CD8-positive, alpha-beta T cell (primary cell): ENCODE measurements at regions of chr19 and their contacts with region 1.

Region 1: GRCh38 chr19:34220472-34221063 is 33.8 kb upstream of the GARRE1 start:
- DNase-seq: peak; percentile 24 to 78 (median 65)
- ATAC-seq: no peak
- H3K4me3 ChIP-seq: no peak overlapping the region
- H3K4me3 Mint-ChIP-seq: no peak overlapping the region
- H3K27ac ChIP-seq: no peak overlapping the region
- H3K27ac Mint-ChIP-seq: peak overlapping the region; percentile 8
- H3K4me1 ChIP-seq: peaks cover 28% of the 10 kb centered on the region
- H3K4me1 Mint-ChIP-seq: peaks cover 58% of the 10 kb centered on the region
- H3K27me3 ChIP-seq: no peaks in the 10 kb centered on the region
- H3K27me3 Mint-ChIP-seq: no peaks in the 10 kb centered on the region
- CTCF ChIP-seq: peak; percentile 81

Region 2: DNA sequence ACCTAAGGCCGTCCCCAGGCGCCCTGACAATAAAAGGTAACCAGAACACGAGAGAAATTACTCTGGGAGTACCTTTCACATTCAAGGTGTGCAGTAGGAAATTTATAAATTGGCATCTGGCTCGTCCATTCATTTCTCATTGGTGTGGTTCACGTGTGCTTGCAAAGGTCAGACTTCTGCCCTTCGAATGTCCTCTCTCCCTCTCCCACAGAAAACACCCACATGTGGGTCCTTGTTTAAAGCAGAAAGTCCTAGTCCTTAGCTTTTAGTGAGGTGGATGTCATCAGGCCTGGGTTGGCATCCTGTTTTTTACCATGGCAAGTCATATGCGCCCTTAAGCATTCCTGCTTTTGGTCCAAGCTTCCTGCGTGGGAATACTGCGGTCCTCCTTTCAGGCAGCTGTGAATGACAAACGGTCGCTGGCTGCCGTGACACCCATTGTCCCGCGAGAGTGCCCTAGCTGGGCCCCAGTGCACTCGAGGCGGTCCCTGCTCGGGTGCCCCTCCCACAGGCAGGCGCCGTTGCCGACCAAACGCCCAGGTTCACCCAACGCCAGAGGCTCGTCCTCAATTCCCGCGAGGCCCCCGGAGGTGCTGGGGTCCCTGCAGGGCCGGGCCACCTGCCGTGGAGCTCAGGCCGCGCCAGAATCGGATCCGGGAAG is 1529.1 kb before region 1 on chr19 and contains the start of gene NUDT19:
- CTCF ChIA-PET with region 1: no interaction called
- POLR2A ChIA-PET with region 1: no interaction called
- intact Hi-C with region 1: loop called in 1 of 2 experiments (anchors 10 kb)
- DNase-seq: peak; percentile 53 to 85 (median 75)
- ATAC-seq: peak; percentile 79
- H3K4me3 ChIP-seq: peak within 1 kb of the TSS; percentile 60 to 79
- H3K4me3 Mint-ChIP-seq: peak within 1 kb of the TSS; percentile 92
- H3K27ac ChIP-seq: peak within 1 kb of the TSS; percentile 35 to 74
- H3K27ac Mint-ChIP-seq: peak within 1 kb of the TSS; percentile 90
- H3K4me1 ChIP-seq: peaks cover 35% of the 10 kb centered on the region
- H3K4me1 Mint-ChIP-seq: peaks cover 52% of the 10 kb centered on the region
- H3K27me3 ChIP-seq: no peaks in the 10 kb centered on the region
- H3K27me3 Mint-ChIP-seq: no peaks in the 10 kb centered on the region
- CTCF ChIP-seq: no peak
- total RNA-seq, gene NUDT19: 15.3 to 18.0 TPM

Region 3: DNA sequence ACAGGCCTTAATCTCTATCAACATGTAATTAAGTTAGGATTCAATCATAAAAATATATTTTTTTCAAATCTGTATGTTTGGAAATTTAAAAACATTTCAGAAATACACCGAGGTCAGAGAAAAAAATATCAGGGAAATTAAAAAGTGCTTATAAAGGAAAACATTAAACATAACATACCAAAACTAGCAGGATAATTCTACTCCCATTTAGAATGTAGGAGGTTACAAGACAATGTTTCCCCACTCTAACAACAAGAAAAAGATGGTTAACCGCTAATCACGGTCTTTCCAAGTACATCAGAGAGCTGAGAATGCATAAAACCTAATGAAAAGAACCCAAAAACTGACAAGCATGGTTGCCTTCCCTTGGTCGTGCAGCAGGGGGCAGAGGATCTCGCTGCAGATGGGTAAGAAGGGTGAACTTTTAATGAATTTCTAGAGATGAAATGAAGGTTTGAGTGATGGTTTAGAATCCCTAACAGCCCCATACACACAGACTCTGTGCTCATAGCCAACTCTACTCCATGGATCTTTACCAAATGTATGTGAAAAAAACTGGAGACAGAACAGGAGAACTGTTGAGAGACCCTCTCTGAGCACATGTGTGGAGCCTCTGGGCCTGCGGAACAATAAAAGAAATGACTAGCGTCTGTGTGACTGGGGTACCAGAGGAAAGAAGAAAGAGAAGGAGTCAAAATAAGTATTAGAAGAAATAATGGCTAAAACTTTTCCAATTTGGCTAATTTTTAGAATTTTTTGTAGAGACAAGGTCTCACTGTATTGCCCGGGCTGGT is 99.5 kb before region 1 on chr19:
- CTCF ChIA-PET with region 1: no interaction called
- POLR2A ChIA-PET with region 1: no interaction called
- intact Hi-C with region 1: loop called in 1 of 2 experiments (anchors 5 kb)
- DNase-seq: peak; percentile 26 to 72 (median 49)
- ATAC-seq: peak; percentile 71
- H3K4me3 ChIP-seq: no peak overlapping the region
- H3K4me3 Mint-ChIP-seq: no peak overlapping the region
- H3K27ac ChIP-seq: no peak overlapping the region
- H3K27ac Mint-ChIP-seq: no peak overlapping the region
- H3K4me1 ChIP-seq: peaks cover 11% of the 10 kb centered on the region
- H3K4me1 Mint-ChIP-seq: peaks cover 17% of the 10 kb centered on the region
- H3K27me3 ChIP-seq: no peaks in the 10 kb centered on the region
- H3K27me3 Mint-ChIP-seq: no peaks in the 10 kb centered on the region
- CTCF ChIP-seq: peak; percentile 73

Region 4: GRCh38 chr19:34134190-34135053 is 86.1 kb before region 1 on chr19:
- CTCF ChIA-PET with region 1: no interaction called
- POLR2A ChIA-PET with region 1: no interaction called
- intact Hi-C with region 1: loop called in 1 of 2 experiments (anchors 5 kb)
- DNase-seq: peak; percentile 80 to 97 (median 92)
- ATAC-seq: peak; percentile 99
- H3K4me3 ChIP-seq: peak overlapping the region; percentile 80 to 89
- H3K4me3 Mint-ChIP-seq: peak overlapping the region; percentile 90
- H3K27ac ChIP-seq: peak overlapping the region; percentile 72 to 81
- H3K27ac Mint-ChIP-seq: peak overlapping the region; percentile 90
- H3K4me1 ChIP-seq: peaks cover 7% of the 10 kb centered on the region
- H3K4me1 Mint-ChIP-seq: peaks cover 11% of the 10 kb centered on the region
- H3K27me3 ChIP-seq: no peaks in the 10 kb centered on the region
- H3K27me3 Mint-ChIP-seq: no peaks in the 10 kb centered on the region
- CTCF ChIP-seq: no peak

Region 5: GRCh38 chr19:34253699-34254551 is 33.4 kb after region 1 on chr19:
- CTCF ChIA-PET with region 1: interaction called, 7 read pairs
- POLR2A ChIA-PET with region 1: no interaction called
- intact Hi-C with region 1: loop called in 1 of 2 experiments (anchors 5 kb)
- DNase-seq: peak in 4 of 9 experiments; percentile 68 to 91 (median 86)
- ATAC-seq: peak; percentile 39
- H3K4me3 ChIP-seq: peak overlapping the region; percentile 78 to 84
- H3K4me3 Mint-ChIP-seq: peak overlapping the region; percentile 98
- H3K27ac ChIP-seq: peak overlapping the region; percentile 87 to 91
- H3K27ac Mint-ChIP-seq: peak overlapping the region; percentile 99
- H3K4me1 ChIP-seq: peaks cover 31% of the 10 kb centered on the region
- H3K4me1 Mint-ChIP-seq: peaks cover 31% of the 10 kb centered on the region
- H3K27me3 ChIP-seq: no peaks in the 10 kb centered on the region
- H3K27me3 Mint-ChIP-seq: no peaks in the 10 kb centered on the region
- CTCF ChIP-seq: no peak

Region 6: GRCh38 chr19:34269968-34270621 is 49.5 kb after region 1 on chr19:
- CTCF ChIA-PET with region 1: interaction called, 3 read pairs
- POLR2A ChIA-PET with region 1: interaction called, 5 read pairs
- intact Hi-C with region 1: loop called (anchors 2 to 5 kb)
- DNase-seq: peak; percentile 42 to 91 (median 72)
- ATAC-seq: peak; percentile 92
- H3K4me3 ChIP-seq: peak overlapping the region; percentile 4 to 5
- H3K4me3 Mint-ChIP-seq: peak overlapping the region; percentile 55
- H3K27ac ChIP-seq: peak overlapping the region; percentile 57 to 82
- H3K27ac Mint-ChIP-seq: peak overlapping the region; percentile 97
- H3K4me1 ChIP-seq: peaks cover 69% of the 10 kb centered on the region
- H3K4me1 Mint-ChIP-seq: peaks cover 80% of the 10 kb centered on the region
- H3K27me3 ChIP-seq: no peaks in the 10 kb centered on the region
- H3K27me3 Mint-ChIP-seq: no peaks in the 10 kb centered on the region
- CTCF ChIP-seq: no peak

Region 7: DNA sequence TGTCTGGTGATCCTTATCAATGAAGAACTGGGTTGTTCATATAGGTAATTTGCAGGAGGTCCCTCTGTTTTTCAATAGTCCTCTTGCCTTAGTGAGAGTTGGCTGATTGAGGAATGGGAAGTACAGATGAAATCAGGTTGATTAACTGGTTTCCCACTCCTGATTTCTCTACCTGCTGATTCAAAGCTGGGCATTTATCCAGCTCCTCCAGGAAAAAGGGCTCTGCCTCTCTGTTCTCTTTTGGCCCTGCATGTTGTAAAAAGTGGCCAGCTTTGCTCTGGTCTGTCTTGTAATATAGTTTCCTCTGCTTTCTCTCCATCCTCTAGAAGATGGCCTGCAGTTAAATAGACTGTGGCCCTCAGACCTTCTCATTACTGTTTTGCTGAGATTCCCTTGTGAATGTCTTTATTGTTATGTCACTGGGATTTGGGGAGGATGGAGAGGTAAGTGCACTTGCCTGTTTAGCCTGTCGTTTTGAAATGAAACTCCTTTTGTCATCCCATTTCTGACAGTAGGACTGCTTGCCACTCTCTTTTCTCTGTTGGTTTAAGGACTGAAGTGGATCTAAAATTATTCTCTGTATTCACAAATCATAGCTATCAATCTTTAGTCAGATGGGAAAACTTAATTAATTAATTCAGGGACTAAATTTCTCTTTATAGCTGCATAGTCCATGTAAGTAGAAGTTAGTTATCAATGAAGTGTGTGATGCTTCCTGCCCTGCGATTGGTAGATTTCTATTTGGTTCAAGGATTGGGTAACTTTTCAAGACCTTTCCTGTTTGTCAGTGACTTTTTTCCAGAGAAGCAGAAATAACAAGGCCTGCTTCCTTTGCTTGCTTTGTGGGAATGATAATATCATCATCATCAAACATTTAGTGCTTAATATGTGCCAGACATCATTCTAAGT is 62.3 kb after region 1 on chr19:
- CTCF ChIA-PET with region 1: no interaction called
- POLR2A ChIA-PET with region 1: no interaction called
- intact Hi-C with region 1: no loop called
- DNase-seq: no peak
- ATAC-seq: no peak
- H3K4me3 ChIP-seq: no peak overlapping the region
- H3K4me3 Mint-ChIP-seq: no peak overlapping the region
- H3K27ac ChIP-seq: no peak overlapping the region
- H3K27ac Mint-ChIP-seq: no peak overlapping the region
- H3K4me1 ChIP-seq: peaks cover 16% of the 10 kb centered on the region
- H3K4me1 Mint-ChIP-seq: peaks cover 36% of the 10 kb centered on the region
- H3K27me3 ChIP-seq: no peaks in the 10 kb centered on the region
- H3K27me3 Mint-ChIP-seq: no peaks in the 10 kb centered on the region
- CTCF ChIP-seq: no peak

Region 8: DNA sequence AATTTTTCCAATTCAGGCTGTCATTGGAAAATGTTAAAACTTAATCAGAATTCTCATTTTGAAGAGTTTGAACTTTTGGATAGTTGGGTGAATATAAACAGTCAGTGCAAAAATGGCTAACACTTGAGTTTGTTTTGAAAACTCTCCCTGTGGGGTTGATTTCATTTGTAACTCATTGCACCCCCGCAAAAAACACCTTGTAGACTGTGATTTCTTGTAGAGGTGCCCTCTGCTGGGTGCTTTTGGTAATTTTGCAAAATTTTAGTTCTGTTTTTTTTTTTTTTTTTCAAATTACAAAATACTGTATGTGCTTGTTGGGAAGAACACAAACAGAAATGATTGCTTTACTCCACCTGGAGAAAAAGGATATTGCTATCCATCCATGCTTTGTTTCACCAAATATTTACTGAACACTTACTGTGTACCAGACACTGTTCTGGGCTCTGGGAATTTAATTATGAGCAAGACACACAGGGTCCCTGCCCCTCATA is 116.3 kb after region 1 on chr19:
- CTCF ChIA-PET with region 1: interaction called, 16 read pairs
- POLR2A ChIA-PET with region 1: no interaction called
- intact Hi-C with region 1: loop called (anchors 2 to 5 kb)
- DNase-seq: peak in 7 of 9 experiments; percentile 20 to 76 (median 56)
- ATAC-seq: peak; percentile 70
- H3K4me3 ChIP-seq: no peak overlapping the region
- H3K4me3 Mint-ChIP-seq: no peak overlapping the region
- H3K27ac ChIP-seq: no peak overlapping the region
- H3K27ac Mint-ChIP-seq: peak overlapping the region; percentile 57
- H3K4me1 ChIP-seq: peaks cover 8% of the 10 kb centered on the region
- H3K4me1 Mint-ChIP-seq: peaks cover 7% of the 10 kb centered on the region
- H3K27me3 ChIP-seq: no peaks in the 10 kb centered on the region
- H3K27me3 Mint-ChIP-seq: no peaks in the 10 kb centered on the region
- CTCF ChIP-seq: peak; percentile 92